Left lung (tissue), 14 donors: ENCODE measurements at regions of chr9 and their contacts with region 1.

Region 1: GRCh38 chr9:38017149-38017884 is 51.7 kb downstream of the SHB start:
- DNase-seq: peak in 2 of 4 donors; percentile 52 to 69
- ATAC-seq: peak; percentile 80
- H3K4me3 ChIP-seq: no peak overlapping the region
- H3K27ac ChIP-seq: peak overlapping the region in 1 of 2 donors; percentile 53
- H3K4me1 ChIP-seq: peaks cover 31 to 66% of the 10 kb centered on the region in 2 donors
- H3K27me3 ChIP-seq: no peaks in the 10 kb centered on the region
- CTCF ChIP-seq: peak; percentile 33

Region 2: DNA sequence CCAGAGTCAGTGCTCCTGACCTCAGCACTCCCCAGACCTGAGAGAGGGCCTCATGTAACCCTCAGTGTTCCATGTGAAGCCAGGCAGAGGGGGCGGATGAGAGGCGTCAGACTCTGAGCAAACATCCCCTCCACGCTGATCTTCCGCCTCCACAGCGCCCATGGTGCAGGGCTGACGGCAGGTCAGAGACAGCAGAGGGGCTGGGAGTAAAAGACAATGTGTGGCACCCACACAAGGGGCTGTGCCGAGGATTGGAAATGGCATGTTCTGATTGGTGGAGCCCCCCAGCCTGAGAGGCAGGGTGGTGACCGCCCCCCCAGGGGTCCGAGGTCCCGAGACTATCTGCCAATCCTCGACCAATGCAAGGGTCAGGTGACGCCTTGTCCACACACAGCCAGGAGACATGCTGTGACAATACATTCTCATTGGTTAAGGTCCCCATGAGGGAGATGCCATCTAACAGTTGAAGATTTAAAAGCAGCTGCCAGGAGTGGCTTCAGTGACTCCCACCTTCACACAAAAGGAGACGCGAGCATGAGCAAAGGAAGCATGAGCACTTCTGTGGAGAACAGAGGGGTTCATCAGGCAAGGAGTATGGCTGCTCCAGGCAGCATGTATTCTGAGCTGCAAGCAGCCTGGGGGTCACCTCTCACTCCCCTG is 94.1 kb before region 1 on chr9:
- intact Hi-C with region 1: no loop called
- DNase-seq: peak in 1 of 4 donors; percentile 36
- ATAC-seq: no peak
- H3K4me3 ChIP-seq: no peak overlapping the region
- H3K27ac ChIP-seq: no peak overlapping the region
- H3K4me1 ChIP-seq: peaks cover 0 to 25% of the 10 kb centered on the region in 2 donors
- H3K27me3 ChIP-seq: no peaks in the 10 kb centered on the region
- CTCF ChIP-seq: no peak

Region 3: GRCh38 chr9:37938121-37938891 is 79.0 kb before region 1 on chr9:
- intact Hi-C with region 1: loop called in 1 of 2 experiments (anchors 10 kb)
- DNase-seq: peak in 2 of 4 donors; percentile 41 to 73
- ATAC-seq: peak; percentile 14
- H3K4me3 ChIP-seq: no peak overlapping the region
- H3K27ac ChIP-seq: peak overlapping the region; percentile 6 to 30
- H3K4me1 ChIP-seq: peaks cover 12 to 16% of the 10 kb centered on the region in 2 donors
- H3K27me3 ChIP-seq: no peaks in the 10 kb centered on the region
- CTCF ChIP-seq: no peak

Region 4: GRCh38 chr9:38417003-38417945 is 400.0 kb after region 1 on chr9:
- intact Hi-C with region 1: no loop called
- DNase-seq: no peak
- ATAC-seq: peak; percentile 40
- H3K4me3 ChIP-seq: no peak overlapping the region
- H3K27ac ChIP-seq: no peak overlapping the region
- H3K4me1 ChIP-seq: no peaks in the 10 kb centered on the region
- H3K27me3 ChIP-seq: peaks cover 0 to 37% of the 10 kb centered on the region in 2 donors
- CTCF ChIP-seq: peak in 1 of 2 donors; percentile 28